Right lobe of liver (tissue), 6 donors: ENCODE measurements at regions of chr11 and their contacts with region 1.

Region 1: GRCh38 chr11:10792398-10792975 is 16.2 kb downstream of the EIF4G2 start:
- DNase-seq: peak; percentile 90 to 94 (median 91)
- ATAC-seq: peak; percentile 97 to 99 (median 98)
- H3K4me3 ChIP-seq: no peak overlapping the region
- H3K27ac ChIP-seq: no peak overlapping the region
- H3K4me1 ChIP-seq: peaks cover 0 to 6% (median 0%) of the 10 kb centered on the region in 4 donors
- H3K27me3 ChIP-seq: no peaks in the 10 kb centered on the region
- CTCF ChIP-seq: peak; percentile 90 to 93 (median 90)
- POLR2A ChIP-seq: no peak

Region 2: GRCh38 chr11:11022125-11022730 is 229.7 kb after region 1 on chr11:
- intact Hi-C with region 1: loop called (anchors 5 to 10 kb)
- DNase-seq: no peak
- ATAC-seq: peak in 2 of 4 donors; percentile 42 to 60
- H3K4me3 ChIP-seq: no peak overlapping the region
- H3K27ac ChIP-seq: no peak overlapping the region
- H3K4me1 ChIP-seq: no peaks in the 10 kb centered on the region
- H3K27me3 ChIP-seq: no peaks in the 10 kb centered on the region
- CTCF ChIP-seq: peak; percentile 35 to 53 (median 42)
- POLR2A ChIP-seq: no peak

Region 3: GRCh38 chr11:11028017-11028692 is 235.7 kb after region 1 on chr11:
- intact Hi-C with region 1: loop called (anchors 5 to 10 kb)
- DNase-seq: peak; percentile 76 to 79 (median 76)
- ATAC-seq: peak; percentile 91 to 97 (median 94)
- H3K4me3 ChIP-seq: no peak overlapping the region
- H3K27ac ChIP-seq: no peak overlapping the region
- H3K4me1 ChIP-seq: no peaks in the 10 kb centered on the region
- H3K27me3 ChIP-seq: no peaks in the 10 kb centered on the region
- CTCF ChIP-seq: peak; percentile 76 to 89 (median 86)
- POLR2A ChIP-seq: no peak